H1 (cell line): ENCODE measurements at regions of chr11 and their contacts with region 1.

Region 1: DNA sequence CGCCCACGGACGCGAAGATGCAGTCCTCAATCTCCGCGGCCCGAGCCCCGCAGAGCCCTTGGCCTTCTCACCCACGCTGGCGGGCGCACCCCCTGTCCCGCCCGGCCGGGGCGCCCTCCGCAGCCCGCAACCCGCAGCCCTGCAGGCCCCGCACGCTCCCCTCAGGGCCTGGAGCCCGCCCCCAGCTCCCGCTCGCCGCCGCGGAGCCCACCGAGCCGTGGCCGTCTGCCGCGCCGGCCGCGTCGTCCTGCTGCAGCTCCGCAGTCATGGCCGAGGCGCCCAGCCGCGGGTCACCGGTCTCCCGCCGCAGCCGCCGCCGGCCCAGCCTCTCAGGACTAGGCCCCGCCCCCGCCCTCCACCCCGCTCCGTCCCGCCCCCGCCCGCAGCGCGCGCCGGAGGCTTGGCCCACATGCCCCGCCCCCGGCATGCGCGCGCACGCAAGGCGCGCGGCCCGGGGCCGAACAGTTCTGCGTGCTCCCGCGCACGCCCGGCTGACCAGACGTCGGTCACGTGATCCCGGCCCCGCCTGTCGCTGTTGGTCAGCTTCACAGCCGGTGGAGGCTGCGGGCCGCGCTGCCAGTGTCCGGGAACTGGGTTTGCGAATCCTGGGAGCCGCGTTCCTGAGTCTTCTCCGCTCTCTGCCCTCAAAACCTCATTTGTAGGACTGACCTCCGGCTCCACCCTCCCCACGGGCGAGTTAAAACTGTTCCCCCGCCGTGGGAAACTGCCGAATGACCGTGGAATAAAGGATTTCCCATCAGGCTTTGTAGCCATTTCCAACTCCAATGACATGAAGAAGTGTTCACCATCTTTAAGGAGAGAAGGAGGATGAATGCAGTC is at the start of gene USP28:
- DNase-seq: peak; percentile 84 to 96
- H3K4me3 ChIP-seq: peak within 1 kb of the TSS; percentile 78 to 100 (median 90)
- H3K27ac ChIP-seq: peak within 1 kb of the TSS; percentile 83; the same call in 1 of the 2 replicates
- H3K4me1 ChIP-seq: peaks cover 4 to 8% (median 7%) of the 10 kb centered on the region in 4 experiments; a peak in 4 of 7 replicates
- H3K27me3 ChIP-seq: no peaks in the 10 kb centered on the region
- CTCF ChIP-seq: no peak
- EP300 ChIP-seq: no peak; a peak in 1 of 3 replicates
- POLR2A ChIP-seq: peak; percentile 64 to 95
- RAD21 ChIP-seq: no peak
- total RNA-seq, gene USP28: 110 and 119 TPM in 2 replicates

Region 2: GRCh38 chr11:113664069-113664980 is 211.1 kb before region 1 on chr11:
- CTCF ChIA-PET with region 1: no interaction called
- POLR2A ChIA-PET with region 1: no interaction called
- DNase-seq: no peak
- H3K4me3 ChIP-seq: no peak overlapping the region
- H3K27ac ChIP-seq: no peak overlapping the region
- H3K4me1 ChIP-seq: 0 out of 7 replicates have a peak, but pooled peaks cover 0 to 3% (median 1%) of the 10 kb centered on the region in 4 experiments
- H3K27me3 ChIP-seq: no peaks in the 10 kb centered on the region
- CTCF ChIP-seq: no peak
- EP300 ChIP-seq: no peak
- POLR2A ChIP-seq: no peak
- RAD21 ChIP-seq: no peak

Region 3: GRCh38 chr11:113849713-113850112 is 25.7 kb before region 1 on chr11:
- CTCF ChIA-PET with region 1: no interaction called
- POLR2A ChIA-PET with region 1: interaction called, 18 read pairs
- DNase-seq: peak; percentile 60 to 73
- H3K4me3 ChIP-seq: peak overlapping the region in 1 of 4 experiments; percentile 14; a peak in 1 of 8 replicates
- H3K27ac ChIP-seq: peak overlapping the region; percentile 72; the same call in 1 of the 2 replicates
- H3K4me1 ChIP-seq: peaks cover 12 to 31% (median 24%) of the 10 kb centered on the region in 4 experiments
- H3K27me3 ChIP-seq: no peaks in the 10 kb centered on the region
- CTCF ChIP-seq: no peak
- EP300 ChIP-seq: peak in 1 of 2 experiments; percentile 93; a peak in 2 of 3 replicates
- POLR2A ChIP-seq: peak in 1 of 2 experiments; percentile 50; a peak in 1 of 3 replicates
- RAD21 ChIP-seq: no peak

Region 4: GRCh38 chr11:113956986-113957385 is 81.5 kb after region 1 on chr11:
- CTCF ChIA-PET with region 1: no interaction called
- POLR2A ChIA-PET with region 1: no interaction called
- DNase-seq: no peak
- H3K4me3 ChIP-seq: no peak overlapping the region
- H3K27ac ChIP-seq: no peak overlapping the region
- H3K4me1 ChIP-seq: peaks cover 2 to 19% (median 5%) of the 10 kb centered on the region in 4 experiments; a peak in 6 of 7 replicates
- H3K27me3 ChIP-seq: no peaks in the 10 kb centered on the region; a peak in 2 of 7 replicates
- CTCF ChIP-seq: no peak
- EP300 ChIP-seq: no peak
- POLR2A ChIP-seq: no peak
- RAD21 ChIP-seq: no peak